Activated CD4-positive, alpha-beta T cell treated with anti-CD3 and anti-CD28 coated beads, Interleukin-2, amount 10 ng/mL, durations not matched to agents 24 days and 14 days (primary cell): ENCODE measurements at regions of chr6 and their contacts with region 1.

Region 1: GRCh38 chr6:2245094-2245876 is at the start of gene GMDS:
- DNase-seq: peak; percentile 96
- H3K4me3 Mint-ChIP-seq: peak within 1 kb of the TSS; percentile 93
- H3K27ac Mint-ChIP-seq: peak within 1 kb of the TSS; percentile 95
- H3K4me1 Mint-ChIP-seq: peaks cover 54% of the 10 kb centered on the region
- H3K27me3 Mint-ChIP-seq: no peaks in the 10 kb centered on the region
- total RNA-seq, gene GMDS: 38.2 and 47.4 TPM in 2 replicates

Region 2: DNA sequence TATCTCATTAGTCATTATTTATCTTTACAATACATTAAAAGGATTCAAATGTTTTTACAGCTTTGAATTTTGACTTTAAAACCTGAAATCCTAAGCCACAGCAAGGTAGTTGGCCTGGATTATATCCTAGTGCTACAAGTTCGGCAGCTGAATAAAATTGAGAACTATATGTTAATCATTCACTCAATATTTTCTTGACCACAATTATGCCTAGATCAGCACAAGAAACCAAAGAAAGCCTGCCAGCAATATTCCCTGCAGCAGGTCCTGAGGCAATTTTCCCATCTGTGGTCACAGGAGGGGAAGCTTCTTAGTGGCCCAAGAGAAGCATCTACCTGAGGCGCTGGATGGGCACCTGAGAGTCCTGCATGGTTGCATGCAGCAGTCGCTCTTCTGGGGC is 183.4 kb before region 1 on chr6:
- intact Hi-C with region 1: no loop called
- DNase-seq: no peak
- H3K4me3 Mint-ChIP-seq: no peak overlapping the region
- H3K27ac Mint-ChIP-seq: no peak overlapping the region
- H3K4me1 Mint-ChIP-seq: peaks cover 4% of the 10 kb centered on the region
- H3K27me3 Mint-ChIP-seq: no peaks in the 10 kb centered on the region

Region 3: GRCh38 chr6:2363211-2363610 is 117.9 kb after region 1 on chr6:
- intact Hi-C with region 1: no loop called
- DNase-seq: no peak
- H3K4me3 Mint-ChIP-seq: no peak overlapping the region
- H3K27ac Mint-ChIP-seq: no peak overlapping the region
- H3K4me1 Mint-ChIP-seq: no peaks in the 10 kb centered on the region
- H3K27me3 Mint-ChIP-seq: peaks cover 4% of the 10 kb centered on the region

Region 4: GRCh38 chr6:2542858-2543218 is 297.6 kb after region 1 on chr6:
- intact Hi-C with region 1: loop called (anchors 10 kb)
- DNase-seq: peak; percentile 93
- H3K4me3 Mint-ChIP-seq: peak overlapping the region; percentile 64
- H3K27ac Mint-ChIP-seq: peak overlapping the region; percentile 25
- H3K4me1 Mint-ChIP-seq: peaks cover 28% of the 10 kb centered on the region
- H3K27me3 Mint-ChIP-seq: peaks cover 69% of the 10 kb centered on the region

Region 5: DNA sequence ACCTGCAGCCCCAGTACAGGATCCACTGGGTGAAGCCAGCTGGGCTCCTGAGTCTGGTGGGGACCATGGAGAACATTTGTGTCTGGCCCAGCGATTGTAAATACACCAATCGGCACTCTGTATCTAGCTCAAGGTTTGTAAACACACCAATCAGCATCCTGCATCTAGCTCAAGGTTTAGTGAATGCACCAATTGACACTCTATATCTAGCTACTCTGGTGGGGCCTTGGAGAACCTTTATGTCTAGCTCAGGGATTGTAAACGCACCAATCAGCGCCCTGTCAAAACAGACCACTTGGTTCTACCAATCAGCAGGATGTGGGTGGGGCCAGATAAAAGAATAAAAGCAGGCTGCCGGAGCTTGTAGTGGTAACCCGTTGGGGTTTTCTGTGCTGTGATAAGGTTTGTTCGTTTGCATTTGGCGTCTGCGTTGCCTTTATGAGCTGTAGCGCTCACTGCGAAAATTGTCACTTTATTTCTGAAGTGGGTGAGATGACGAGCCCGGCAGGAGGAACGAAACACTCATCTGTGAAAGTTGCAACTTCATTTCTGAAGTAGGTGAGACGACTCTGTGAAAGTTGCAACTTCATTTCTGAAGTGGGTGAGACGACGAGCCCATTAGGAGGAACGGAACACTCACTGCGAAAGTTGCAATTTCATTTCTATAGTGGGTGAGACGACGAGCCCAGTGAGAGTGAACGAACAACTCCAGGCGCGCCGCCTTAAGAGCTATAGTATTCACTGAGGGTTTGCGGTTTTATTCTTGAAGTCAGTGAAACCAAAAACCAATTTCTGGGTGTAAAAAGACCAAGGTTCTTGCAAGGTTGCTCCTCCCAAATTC is 694.9 kb after region 1 on chr6:
- intact Hi-C with region 1: no loop called
- DNase-seq: peak; percentile 92
- H3K4me3 Mint-ChIP-seq: peak overlapping the region; percentile 67
- H3K27ac Mint-ChIP-seq: peak overlapping the region; percentile 97
- H3K4me1 Mint-ChIP-seq: peaks cover 51% of the 10 kb centered on the region
- H3K27me3 Mint-ChIP-seq: peaks cover 9% of the 10 kb centered on the region